ENCODE measurements at regions of chr3 and their contacts with region 1.

Region 1: GRCh38 chr3:171809821-171810628 is at the start of gene PLD1:
- DNase-seq: peak; percentile 27
- H3K4me3 Mint-ChIP-seq: peak within 1 kb of the TSS; percentile 83
- H3K27ac Mint-ChIP-seq: no peak within 1 kb of the TSS
- H3K4me1 Mint-ChIP-seq: peaks cover 22% of the 10 kb centered on the region
- H3K27me3 Mint-ChIP-seq: peaks cover 53% of the 10 kb centered on the region
- total RNA-seq, gene PLD1: 0.15 and 0.29 TPM in 2 replicates

Region 2: GRCh38 chr3:171443211-171443957 is 366.6 kb before region 1 on chr3:
- intact Hi-C with region 1: no loop called
- DNase-seq: no peak
- H3K4me3 Mint-ChIP-seq: no peak overlapping the region
- H3K27ac Mint-ChIP-seq: no peak overlapping the region
- H3K4me1 Mint-ChIP-seq: peaks cover 51% of the 10 kb centered on the region
- H3K27me3 Mint-ChIP-seq: no peaks in the 10 kb centered on the region

Region 3: DNA sequence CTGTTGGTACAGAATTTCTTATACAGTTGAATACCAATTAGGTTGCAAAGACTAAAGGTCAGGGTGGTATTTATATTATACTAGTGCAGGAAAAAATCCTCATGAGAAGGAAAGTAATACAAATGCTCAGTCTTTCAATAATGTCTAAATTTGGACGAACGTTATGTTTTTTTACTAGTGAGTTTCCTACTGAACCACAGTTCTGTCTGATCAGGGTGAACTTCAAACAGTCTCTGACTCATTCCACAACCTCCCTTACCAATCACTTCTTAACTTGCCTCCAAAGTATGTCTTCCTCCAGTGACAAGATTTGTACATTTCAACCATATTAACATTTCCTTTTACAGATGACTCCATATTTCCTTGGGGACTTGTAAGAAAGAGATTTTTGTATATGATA is 36.6 kb after region 1 on chr3:
- intact Hi-C with region 1: loop called (anchors 1 kb)
- DNase-seq: peak; percentile 7
- H3K4me3 Mint-ChIP-seq: no peak overlapping the region
- H3K27ac Mint-ChIP-seq: no peak overlapping the region
- H3K4me1 Mint-ChIP-seq: peaks cover 20% of the 10 kb centered on the region
- H3K27me3 Mint-ChIP-seq: peaks cover 11% of the 10 kb centered on the region

Region 4: DNA sequence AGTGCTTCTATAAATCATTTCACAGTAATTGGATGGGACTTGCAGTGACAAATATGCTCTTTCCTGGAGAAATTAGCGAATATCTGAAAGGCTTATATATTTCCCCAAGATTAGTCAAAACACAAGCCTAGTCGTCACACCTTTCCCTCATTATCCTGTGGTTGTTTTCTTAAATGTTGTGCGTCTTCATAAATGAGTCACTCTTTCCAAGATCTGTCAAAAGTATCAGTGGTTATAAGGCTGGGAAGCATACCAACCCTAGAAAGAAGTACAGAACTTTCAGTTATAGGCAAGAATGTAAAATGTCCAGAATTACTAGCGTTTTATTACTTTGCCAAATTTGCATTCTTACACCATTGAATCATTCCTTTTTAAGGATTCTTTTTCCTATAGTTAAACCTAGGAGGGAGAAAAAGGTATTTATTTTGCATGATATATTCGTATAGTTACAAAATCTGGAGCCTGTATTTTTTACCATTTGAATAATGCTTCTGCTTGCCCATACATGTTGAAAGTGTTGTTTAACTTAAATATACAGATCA is 66.7 kb after region 1 on chr3:
- intact Hi-C with region 1: loop called (anchors 1 kb)
- DNase-seq: no peak
- H3K4me3 Mint-ChIP-seq: no peak overlapping the region
- H3K27ac Mint-ChIP-seq: peak overlapping the region; percentile 18
- H3K4me1 Mint-ChIP-seq: peaks cover 11% of the 10 kb centered on the region
- H3K27me3 Mint-ChIP-seq: peaks cover 16% of the 10 kb centered on the region

Region 5: DNA sequence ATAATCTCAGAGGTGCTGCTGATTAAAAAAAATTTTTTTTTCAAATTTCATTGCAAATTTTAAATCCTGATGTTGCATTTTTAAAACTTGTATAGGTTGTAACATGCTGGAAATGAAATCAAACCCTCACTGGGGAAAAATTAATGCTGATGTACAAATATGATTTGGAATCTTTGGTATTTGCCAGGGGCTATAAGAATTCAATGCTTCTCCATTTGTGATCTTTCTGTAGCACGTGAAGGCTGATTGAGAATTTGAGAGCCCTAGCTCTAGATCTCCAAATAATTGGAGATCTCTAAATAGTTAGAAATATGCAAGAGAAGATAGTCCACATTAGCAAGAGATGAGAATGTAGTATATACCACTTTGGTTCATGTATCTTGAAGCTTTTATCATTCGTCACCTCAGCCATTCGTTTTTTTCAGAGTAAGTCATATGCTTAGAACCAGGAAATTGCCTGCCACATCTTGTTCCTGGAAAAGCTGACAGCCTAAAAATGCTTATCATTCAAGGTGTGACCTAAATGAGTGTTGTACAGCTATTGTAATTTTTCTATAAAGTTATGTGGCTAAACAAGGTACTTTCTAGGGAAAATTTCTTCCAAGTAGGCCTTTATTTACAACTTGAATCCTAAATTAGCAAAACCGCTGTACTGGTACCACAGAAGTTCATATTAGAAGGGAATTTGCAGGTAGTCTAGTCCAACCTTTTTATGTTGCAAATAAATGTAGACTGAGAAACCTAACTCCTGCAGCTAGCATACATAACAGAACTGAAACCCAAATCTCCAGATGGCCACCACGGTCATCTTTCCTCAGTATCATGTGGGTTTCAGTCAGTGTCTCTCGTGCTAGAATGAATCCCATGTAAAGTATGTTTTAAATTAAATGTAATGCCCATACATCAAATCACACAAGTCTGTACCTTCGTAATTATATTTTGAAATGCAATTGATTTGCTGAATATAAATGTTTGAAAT is 277.9 kb after region 1 on chr3:
- intact Hi-C with region 1: loop called (anchors 5 kb)
- DNase-seq: no peak
- H3K4me3 Mint-ChIP-seq: peak overlapping the region; percentile 25
- H3K27ac Mint-ChIP-seq: peak overlapping the region; percentile 59
- H3K4me1 Mint-ChIP-seq: peaks cover 66% of the 10 kb centered on the region
- H3K27me3 Mint-ChIP-seq: no peaks in the 10 kb centered on the region

Region 6: GRCh38 chr3:172153335-172153861 is 343.4 kb after region 1 on chr3:
- intact Hi-C with region 1: no loop called
- DNase-seq: peak; percentile 29
- H3K4me3 Mint-ChIP-seq: no peak overlapping the region
- H3K27ac Mint-ChIP-seq: peak overlapping the region; percentile 65
- H3K4me1 Mint-ChIP-seq: peaks cover 32% of the 10 kb centered on the region
- H3K27me3 Mint-ChIP-seq: no peaks in the 10 kb centered on the region

Measured in activated T-helper 1 cell treated with anti-CD3 and anti-CD28 coated beads, Interleukin-12 subunit alpha, Interleukin-12 subunit beta, Interleukin-2, Interleukin-4 antibody, amounts not matched to agents 30 ng/mL and 10 ng/mL and 1 ng/mL, durations not matched to agents 14 hours and 24 hours and 36 hours (primary cell).